B cell (primary cell): ENCODE measurements at regions of chr19 and their contacts with region 1.

Region 1: GRCh38 chr19:9768175-9769112 is at the start of gene ZNF846:
- DNase-seq: peak; percentile 96
- ATAC-seq: peak; percentile 98
- H3K4me3 ChIP-seq: peak within 1 kb of the TSS; percentile 52 to 96 (median 88)
- H3K4me3 Mint-ChIP-seq: peak within 1 kb of the TSS; percentile 96
- H3K27ac ChIP-seq: peak within 1 kb of the TSS; percentile 69 to 94
- H3K27ac Mint-ChIP-seq: peak within 1 kb of the TSS; percentile 98
- H3K4me1 ChIP-seq: peaks cover 0 to 13% of the 10 kb centered on the region in 2 donors
- H3K4me1 Mint-ChIP-seq: peaks cover 15% of the 10 kb centered on the region
- H3K27me3 ChIP-seq: no peaks in the 10 kb centered on the region
- H3K27me3 Mint-ChIP-seq: no peaks in the 10 kb centered on the region
- CTCF ChIP-seq: no peak
- total RNA-seq, gene ZNF846: 18.2 and 24.5 TPM in 2 replicates

Region 2: GRCh38 chr19:9674663-9675357 is 93.6 kb before region 1 on chr19 and contains the start of gene ZNF562:
- CTCF ChIA-PET with region 1: no interaction called
- POLR2A ChIA-PET with region 1: no interaction called
- intact Hi-C with region 1: loop called (anchors 1 kb)
- DNase-seq: peak; percentile 90
- ATAC-seq: peak; percentile 88
- H3K4me3 ChIP-seq: peak within 1 kb of the TSS; percentile 74 to 95 (median 81)
- H3K4me3 Mint-ChIP-seq: peak within 1 kb of the TSS; percentile 100
- H3K27ac ChIP-seq: peak within 1 kb of the TSS; percentile 80 to 89
- H3K27ac Mint-ChIP-seq: peak within 1 kb of the TSS; percentile 99
- H3K4me1 ChIP-seq: peaks cover 3% of the 10 kb centered on the region in 2 donors
- H3K4me1 Mint-ChIP-seq: peaks cover 18% of the 10 kb centered on the region
- H3K27me3 ChIP-seq: no peaks in the 10 kb centered on the region
- H3K27me3 Mint-ChIP-seq: no peaks in the 10 kb centered on the region
- CTCF ChIP-seq: no peak
- total RNA-seq, gene ZNF562: 27.9 and 31.8 TPM in 2 replicates

Region 3: GRCh38 chr19:9721861-9722260 is 46.6 kb before region 1 on chr19:
- CTCF ChIA-PET with region 1: no interaction called
- POLR2A ChIA-PET with region 1: no interaction called
- intact Hi-C with region 1: no loop called
- DNase-seq: peak; percentile 23
- ATAC-seq: peak; percentile 33
- H3K4me3 ChIP-seq: peak overlapping the region in 3 of 5 experiments; percentile 20 to 36 (median 27)
- H3K4me3 Mint-ChIP-seq: peak overlapping the region; percentile 84
- H3K27ac ChIP-seq: peak overlapping the region; percentile 10 to 42
- H3K27ac Mint-ChIP-seq: peak overlapping the region; percentile 93
- H3K4me1 ChIP-seq: peaks cover 7% of the 10 kb centered on the region in 2 donors
- H3K4me1 Mint-ChIP-seq: peaks cover 13% of the 10 kb centered on the region
- H3K27me3 ChIP-seq: no peaks in the 10 kb centered on the region
- H3K27me3 Mint-ChIP-seq: peaks cover 10% of the 10 kb centered on the region
- CTCF ChIP-seq: no peak

Region 4: DNA sequence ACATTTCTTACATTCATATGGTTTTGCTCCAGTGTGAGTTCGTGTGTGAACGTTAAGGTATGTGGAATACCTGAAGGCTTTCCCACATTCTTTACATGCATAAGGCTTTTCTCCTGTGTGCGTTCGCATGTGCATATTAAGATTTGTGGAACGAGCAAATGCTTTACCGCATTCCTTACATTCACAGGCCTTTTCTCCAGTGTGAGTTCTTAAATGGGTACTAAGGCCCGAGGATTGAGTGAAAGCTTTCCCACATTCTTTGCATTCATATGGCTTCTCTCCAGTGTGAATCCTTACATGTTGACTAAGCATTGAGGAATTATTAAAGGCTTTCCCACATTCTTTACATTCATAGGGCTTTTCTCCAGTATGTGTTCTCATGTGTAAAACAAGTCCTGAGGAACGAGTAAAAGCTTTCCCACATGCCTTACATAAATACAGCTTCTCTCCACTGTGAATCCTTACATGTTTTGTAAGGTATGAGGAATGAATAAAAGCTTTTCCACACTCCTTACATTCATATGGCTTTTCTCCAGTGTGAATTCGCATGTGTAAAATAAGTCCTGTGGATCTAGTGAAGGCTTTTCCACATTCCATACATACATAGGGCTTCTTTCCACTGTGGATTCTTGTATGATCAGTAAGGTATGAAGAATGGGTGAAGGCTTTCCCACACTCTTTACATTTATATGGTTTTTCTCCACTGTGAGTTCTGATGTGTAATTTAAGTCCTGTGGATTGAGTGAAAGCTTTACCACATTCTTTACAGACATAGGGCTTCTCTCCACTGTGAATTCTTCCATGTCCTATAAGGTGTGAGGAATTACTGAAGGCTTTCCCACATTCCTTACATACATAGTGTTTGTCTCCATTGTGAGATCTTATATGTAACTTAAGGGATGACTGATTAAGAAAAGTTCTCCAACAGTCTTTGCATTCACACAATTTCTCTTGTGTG is 10.6 kb before region 1 on chr19:
- CTCF ChIA-PET with region 1: no interaction called
- POLR2A ChIA-PET with region 1: no interaction called
- intact Hi-C with region 1: no loop called
- DNase-seq: no peak
- ATAC-seq: no peak
- H3K4me3 ChIP-seq: no peak overlapping the region
- H3K4me3 Mint-ChIP-seq: no peak overlapping the region
- H3K27ac ChIP-seq: no peak overlapping the region
- H3K27ac Mint-ChIP-seq: no peak overlapping the region
- H3K4me1 ChIP-seq: no peaks in the 10 kb centered on the region
- H3K4me1 Mint-ChIP-seq: no peaks in the 10 kb centered on the region
- H3K27me3 ChIP-seq: no peaks in the 10 kb centered on the region
- H3K27me3 Mint-ChIP-seq: no peaks in the 10 kb centered on the region
- CTCF ChIP-seq: no peak

Region 5: DNA sequence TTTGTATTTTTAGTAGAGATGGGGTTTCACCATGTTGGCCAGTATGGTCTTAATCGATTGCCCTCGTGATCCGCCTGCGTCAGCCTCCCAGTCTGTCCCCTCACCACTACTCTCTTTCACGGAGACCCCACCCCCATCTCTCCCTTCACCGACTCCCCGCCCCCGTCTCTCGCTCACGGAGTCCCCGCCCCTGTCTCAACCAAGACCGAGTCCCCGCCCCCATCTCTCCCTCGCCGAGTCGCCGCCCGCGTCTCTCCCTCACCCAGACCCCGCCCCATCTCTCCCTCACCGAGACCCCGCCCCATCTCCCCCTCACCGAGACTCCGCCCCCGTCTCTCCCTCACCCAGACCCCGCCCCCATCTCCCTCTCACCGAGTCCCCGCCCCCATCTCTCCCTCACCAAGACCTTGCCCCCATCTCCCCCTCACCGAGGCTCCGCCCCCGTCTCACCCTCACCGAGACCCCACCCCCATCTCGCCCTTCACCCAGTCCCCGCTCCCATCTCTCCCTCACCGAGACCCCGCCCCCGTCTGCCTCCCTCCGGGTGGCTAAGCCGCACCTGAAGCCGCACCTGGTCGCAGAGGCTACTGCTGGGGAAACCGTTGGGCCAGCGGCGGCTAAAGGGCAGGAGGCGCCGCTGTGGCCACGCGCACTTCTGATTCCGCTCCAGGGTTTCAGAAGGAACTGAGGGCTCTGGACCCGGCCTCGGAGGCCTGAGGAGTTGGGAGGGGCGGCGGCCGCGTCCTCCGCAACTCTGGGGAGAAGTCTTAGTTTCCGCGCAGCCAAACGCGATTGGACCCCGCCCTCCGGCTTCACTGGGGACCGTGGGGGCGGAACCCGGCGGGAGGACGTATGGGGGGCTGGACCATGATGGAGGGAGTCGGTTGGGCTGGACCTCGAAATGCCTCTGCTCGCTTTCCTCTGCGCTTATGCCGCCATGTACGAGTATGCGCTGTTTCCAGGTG is 17.2 kb after region 1 on chr19:
- CTCF ChIA-PET with region 1: no interaction called
- POLR2A ChIA-PET with region 1: interaction called, 3 read pairs
- intact Hi-C with region 1: loop called (anchors 1 kb)
- DNase-seq: peak; percentile 97
- ATAC-seq: peak; percentile 81
- H3K4me3 ChIP-seq: peak overlapping the region; percentile 45 to 94 (median 75)
- H3K4me3 Mint-ChIP-seq: peak overlapping the region; percentile 92
- H3K27ac ChIP-seq: peak overlapping the region; percentile 80 to 97
- H3K27ac Mint-ChIP-seq: peak overlapping the region; percentile 95
- H3K4me1 ChIP-seq: peaks cover 5 to 14% of the 10 kb centered on the region in 2 donors
- H3K4me1 Mint-ChIP-seq: peaks cover 22% of the 10 kb centered on the region
- H3K27me3 ChIP-seq: no peaks in the 10 kb centered on the region
- H3K27me3 Mint-ChIP-seq: no peaks in the 10 kb centered on the region
- CTCF ChIP-seq: no peak